ENCODE measurements at regions of chr4 and their contacts with region 1.

Region 1: GRCh38 chr4:70734168-70734954 is 12.6 kb downstream of the RUFY3 start:
- DNase-seq: peak; percentile 59
- ATAC-seq: peak; percentile 90
- H3K4me3 Mint-ChIP-seq: peak overlapping the region; percentile 76
- H3K27ac Mint-ChIP-seq: peak overlapping the region; percentile 90
- H3K4me1 Mint-ChIP-seq: peaks cover 37% of the 10 kb centered on the region
- H3K27me3 Mint-ChIP-seq: no peaks in the 10 kb centered on the region
- CTCF ChIP-seq: no peak

Region 2: DNA sequence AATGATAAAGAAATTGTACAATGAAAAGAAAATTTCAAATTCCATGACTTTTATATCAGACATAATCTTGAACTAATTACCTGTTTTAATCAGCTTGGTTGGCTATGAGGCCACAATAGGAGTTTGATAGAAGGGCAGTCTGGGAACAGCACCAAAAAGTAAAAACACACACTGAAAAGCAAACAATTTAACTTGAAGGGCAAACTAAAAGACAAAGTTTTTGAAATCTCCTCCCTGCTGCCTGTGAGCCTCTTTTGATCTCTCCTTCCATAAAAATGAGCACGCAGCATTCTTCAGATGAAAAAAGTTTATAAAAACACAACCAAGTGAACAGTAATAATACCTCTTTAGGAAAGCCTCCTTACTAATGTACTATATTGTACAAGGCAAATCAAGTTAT is 530.8 kb before region 1 on chr4:
- CTCF ChIA-PET with region 1: no interaction called
- POLR2A ChIA-PET with region 1: no interaction called
- intact Hi-C with region 1: no loop called
- DNase-seq: no peak
- ATAC-seq: no peak
- H3K4me3 Mint-ChIP-seq: no peak overlapping the region
- H3K27ac Mint-ChIP-seq: no peak overlapping the region
- H3K4me1 Mint-ChIP-seq: no peaks in the 10 kb centered on the region
- H3K27me3 Mint-ChIP-seq: no peaks in the 10 kb centered on the region
- CTCF ChIP-seq: no peak

Region 3: GRCh38 chr4:70687821-70688794 is 46.3 kb before region 1 on chr4 and contains the start of gene UTP3:
- CTCF ChIA-PET with region 1: interaction called, 8 read pairs
- POLR2A ChIA-PET with region 1: interaction called, 11 read pairs
- intact Hi-C with region 1: no loop called
- DNase-seq: peak; percentile 95
- ATAC-seq: peak; percentile 92
- H3K4me3 Mint-ChIP-seq: peak within 1 kb of the TSS; percentile 97
- H3K27ac Mint-ChIP-seq: peak within 1 kb of the TSS; percentile 94
- H3K4me1 Mint-ChIP-seq: peaks cover 29% of the 10 kb centered on the region
- H3K27me3 Mint-ChIP-seq: no peaks in the 10 kb centered on the region
- CTCF ChIP-seq: peak; percentile 97
- total RNA-seq, gene UTP3: 31.0 to 33.5 TPM

Region 4: DNA sequence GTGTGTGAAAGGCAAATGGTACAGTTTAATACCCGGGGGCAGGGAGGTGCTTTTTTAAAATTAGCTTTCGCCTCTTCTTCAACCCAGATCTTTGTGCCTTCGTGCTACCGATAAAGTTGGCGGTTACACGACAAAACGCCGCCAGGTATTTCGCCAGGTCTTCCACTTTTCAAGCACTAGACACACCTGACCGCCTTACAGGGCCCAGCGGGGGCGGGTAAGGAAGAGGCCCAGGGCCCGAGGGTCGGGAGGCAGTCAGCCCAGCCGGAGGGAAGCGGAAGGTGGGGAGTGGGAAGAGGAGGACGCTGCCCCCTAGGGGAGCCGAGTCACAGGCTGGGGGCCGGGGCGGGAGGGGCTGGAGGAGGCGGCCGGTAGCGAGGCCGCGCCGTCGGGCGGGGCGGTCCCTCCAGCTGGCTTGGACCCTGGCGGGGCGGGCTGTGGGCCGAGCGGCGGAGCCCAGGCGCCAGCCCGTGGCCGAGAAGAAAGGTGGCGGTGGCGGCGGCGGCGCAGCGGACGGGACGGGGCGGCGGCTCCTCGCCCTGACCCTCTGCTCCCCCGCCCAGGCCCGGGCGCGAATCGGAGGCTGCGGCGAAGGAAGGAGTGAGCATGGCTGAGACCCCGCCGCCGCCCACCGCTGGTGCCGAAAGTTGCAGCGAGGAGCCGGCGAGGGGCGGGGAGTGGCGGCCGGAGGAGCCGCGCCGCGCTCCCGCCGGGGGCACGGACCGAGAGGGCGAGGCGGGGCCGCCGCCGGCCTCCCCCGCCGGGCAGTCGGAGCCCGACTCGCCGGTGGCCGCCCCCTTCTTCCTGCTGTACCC is 29.8 kb before region 1 on chr4:
- CTCF ChIA-PET with region 1: interaction called, 31 read pairs
- POLR2A ChIA-PET with region 1: interaction called, 15 read pairs
- intact Hi-C with region 1: no loop called
- DNase-seq: peak; percentile 69
- ATAC-seq: peak; percentile 54
- H3K4me3 Mint-ChIP-seq: peak overlapping the region; percentile 85
- H3K27ac Mint-ChIP-seq: peak overlapping the region; percentile 92
- H3K4me1 Mint-ChIP-seq: peaks cover 22% of the 10 kb centered on the region
- H3K27me3 Mint-ChIP-seq: no peaks in the 10 kb centered on the region
- CTCF ChIP-seq: no peak

Region 5: GRCh38 chr4:70721747-70722146 is 12.6 kb before region 1 on chr4 and contains the start of gene RUFY3:
- CTCF ChIA-PET with region 1: interaction called, 23 read pairs
- POLR2A ChIA-PET with region 1: no interaction called
- intact Hi-C with region 1: no loop called
- DNase-seq: no peak
- ATAC-seq: no peak
- H3K4me3 Mint-ChIP-seq: peak within 1 kb of the TSS; percentile 0
- H3K27ac Mint-ChIP-seq: peak within 1 kb of the TSS; percentile 37
- H3K4me1 Mint-ChIP-seq: peaks cover 21% of the 10 kb centered on the region
- H3K27me3 Mint-ChIP-seq: no peaks in the 10 kb centered on the region
- CTCF ChIP-seq: no peak
- total RNA-seq, gene RUFY3: 13.6 to 17.5 TPM

Region 6: DNA sequence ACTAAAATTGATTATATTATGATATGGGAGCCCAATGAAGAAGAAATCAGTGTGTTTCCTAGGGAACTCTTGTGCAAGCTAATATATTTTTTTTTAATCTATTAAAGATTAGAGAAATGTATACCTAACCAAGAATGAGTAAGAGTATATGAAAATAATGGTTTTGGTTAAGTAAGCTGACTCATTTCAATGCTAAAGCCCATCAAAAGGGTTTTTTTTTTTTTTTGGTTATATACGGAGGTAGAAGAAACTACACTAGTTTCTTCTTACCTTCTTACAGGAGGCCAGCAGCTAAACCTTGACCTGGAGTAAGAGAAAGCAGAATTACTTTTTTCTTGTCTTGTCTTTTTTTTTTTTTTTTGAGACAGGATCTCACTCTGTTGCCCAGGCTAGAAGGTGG is 15.0 kb after region 1 on chr4:
- CTCF ChIA-PET with region 1: interaction called, 20 read pairs
- POLR2A ChIA-PET with region 1: interaction called, 14 read pairs
- intact Hi-C with region 1: no loop called
- DNase-seq: no peak
- ATAC-seq: peak; percentile 81
- H3K4me3 Mint-ChIP-seq: no peak overlapping the region
- H3K27ac Mint-ChIP-seq: no peak overlapping the region
- H3K4me1 Mint-ChIP-seq: peaks cover 5% of the 10 kb centered on the region
- H3K27me3 Mint-ChIP-seq: no peaks in the 10 kb centered on the region
- CTCF ChIP-seq: no peak

Region 7: DNA sequence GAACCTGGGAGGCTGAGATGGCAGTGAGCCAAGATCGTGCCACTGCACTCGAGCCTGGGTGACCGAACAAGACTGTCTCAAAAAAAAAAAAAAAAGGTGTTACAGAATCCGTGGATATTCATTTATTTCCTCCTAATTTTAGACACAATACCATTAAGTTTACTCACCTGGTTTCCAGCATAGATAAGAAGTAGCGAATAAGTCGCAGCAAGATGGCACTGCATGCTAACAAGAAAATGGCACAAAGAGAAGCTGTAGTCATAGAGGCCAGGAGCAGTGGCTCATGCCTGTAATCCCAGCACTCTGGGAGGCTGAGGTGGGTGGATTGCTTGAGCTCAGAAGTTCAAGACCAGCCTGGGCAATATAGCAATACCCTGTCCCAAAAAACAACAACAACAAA is 150.8 kb after region 1 on chr4:
- CTCF ChIA-PET with region 1: no interaction called
- POLR2A ChIA-PET with region 1: no interaction called
- intact Hi-C with region 1: no loop called
- DNase-seq: no peak
- ATAC-seq: no peak
- H3K4me3 Mint-ChIP-seq: no peak overlapping the region
- H3K27ac Mint-ChIP-seq: no peak overlapping the region
- H3K4me1 Mint-ChIP-seq: no peaks in the 10 kb centered on the region
- H3K27me3 Mint-ChIP-seq: no peaks in the 10 kb centered on the region
- CTCF ChIP-seq: no peak

Region 8: DNA sequence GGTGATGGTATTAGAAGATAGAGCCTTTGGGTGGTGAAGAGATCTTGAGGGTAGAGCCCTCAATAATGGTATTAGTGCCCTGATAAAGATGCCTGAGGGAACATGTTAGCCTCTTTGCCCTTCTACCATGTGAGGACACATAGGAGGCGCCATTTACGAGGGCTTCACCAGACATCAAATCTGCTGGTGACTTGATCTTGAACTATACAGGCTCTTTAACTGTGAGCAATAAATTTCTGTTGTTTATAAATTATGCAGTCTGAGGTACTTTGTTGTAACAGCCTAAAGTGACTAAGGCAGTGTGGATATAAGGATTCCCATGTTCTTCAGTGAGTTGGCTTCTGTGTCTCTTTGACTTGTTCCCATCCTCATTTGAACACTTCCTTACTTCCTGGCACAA is 179.6 kb after region 1 on chr4:
- CTCF ChIA-PET with region 1: no interaction called
- POLR2A ChIA-PET with region 1: no interaction called
- intact Hi-C with region 1: no loop called
- DNase-seq: no peak
- ATAC-seq: no peak
- H3K4me3 Mint-ChIP-seq: no peak overlapping the region
- H3K27ac Mint-ChIP-seq: no peak overlapping the region
- H3K4me1 Mint-ChIP-seq: peaks cover 17% of the 10 kb centered on the region
- H3K27me3 Mint-ChIP-seq: no peaks in the 10 kb centered on the region
- CTCF ChIP-seq: no peak

Measured in activated CD8-positive, alpha-beta T cell treated with anti-CD3 and anti-CD28 coated beads for 36 hours (primary cell).